ENCODE measurements at regions of chr2 and their contacts with region 1.

Region 1: DNA sequence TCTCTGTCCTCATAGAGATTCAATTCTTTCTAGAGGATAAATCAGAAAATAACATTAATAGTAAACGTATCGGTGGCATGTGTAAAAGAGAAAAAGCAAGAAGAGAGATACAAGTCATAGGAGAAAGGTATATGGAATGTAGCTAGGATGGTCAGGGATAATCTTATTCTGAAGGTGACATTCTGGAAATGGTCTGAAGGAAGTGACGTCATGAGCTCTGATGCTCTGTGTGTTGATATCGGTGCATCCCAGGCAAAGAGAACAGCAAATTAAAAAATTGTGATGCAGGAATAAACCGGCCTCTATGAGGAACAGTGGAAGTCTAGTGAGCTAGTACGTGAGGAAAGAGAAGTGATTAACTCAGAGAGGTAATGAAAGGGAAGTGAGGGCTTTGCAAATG is 1215.8 kb downstream of the CNTNAP5 start:
- DNase-seq: no peak
- ATAC-seq: no peak
- H3K4me3 ChIP-seq: no peak overlapping the region
- H3K27ac ChIP-seq: no peak overlapping the region
- H3K4me1 ChIP-seq: no peaks in the 10 kb centered on the region
- H3K27me3 ChIP-seq: no peaks in the 10 kb centered on the region
- CTCF ChIP-seq: no peak
- EP300 ChIP-seq: no peak
- POLR2A ChIP-seq: no peak
- RAD21 ChIP-seq: no peak

Region 2: GRCh38 chr2:125167820-125168219 is 73.1 kb before region 1 on chr2:
- CTCF ChIA-PET with region 1: no interaction called
- POLR2A ChIA-PET with region 1: no interaction called
- in situ Hi-C with region 1: no loop called
- intact Hi-C with region 1: loop called (anchors 10 kb)
- DNase-seq: no peak
- ATAC-seq: no peak
- H3K4me3 ChIP-seq: no peak overlapping the region
- H3K27ac ChIP-seq: no peak overlapping the region
- H3K4me1 ChIP-seq: no peaks in the 10 kb centered on the region
- H3K27me3 ChIP-seq: no peaks in the 10 kb centered on the region
- CTCF ChIP-seq: no peak
- EP300 ChIP-seq: no peak
- POLR2A ChIP-seq: no peak
- RAD21 ChIP-seq: no peak

Region 3: DNA sequence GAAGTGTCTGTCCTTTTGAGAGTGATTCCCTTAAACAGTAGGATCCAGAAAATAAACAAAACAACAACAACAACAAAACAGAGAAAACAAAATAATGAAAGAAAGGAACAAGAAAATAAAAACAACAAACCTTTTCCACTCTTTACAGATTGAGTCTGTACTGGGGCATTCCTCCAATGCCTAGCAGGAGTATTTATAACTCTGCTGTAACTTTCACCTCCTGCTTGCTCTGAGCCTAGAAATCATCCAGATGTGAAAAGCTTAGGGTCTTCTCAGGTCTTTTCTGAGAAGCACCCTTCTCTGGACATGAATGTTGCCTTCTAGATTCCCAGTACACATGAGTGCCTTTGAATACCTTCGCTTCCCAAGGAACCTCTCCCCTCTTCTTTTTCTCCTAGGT is 23.6 kb after region 1 on chr2:
- CTCF ChIA-PET with region 1: no interaction called
- POLR2A ChIA-PET with region 1: no interaction called
- in situ Hi-C with region 1: no loop called
- intact Hi-C with region 1: no loop called
- DNase-seq: no peak
- ATAC-seq: no peak
- H3K4me3 ChIP-seq: no peak overlapping the region
- H3K27ac ChIP-seq: no peak overlapping the region
- H3K4me1 ChIP-seq: no peaks in the 10 kb centered on the region
- H3K27me3 ChIP-seq: no peaks in the 10 kb centered on the region
- CTCF ChIP-seq: no peak
- EP300 ChIP-seq: no peak
- POLR2A ChIP-seq: no peak
- RAD21 ChIP-seq: no peak

Measured in HepG2 (cell line).